PC-3 (cell line): ENCODE measurements at regions of chr2 and their contacts with region 1.

Region 1: GRCh38 chr2:183038341-183039300 is at the start of gene NCKAP1:
- DNase-seq: peak; percentile 92
- ATAC-seq: peak; percentile 86
- H3K4me3 ChIP-seq: peak within 1 kb of the TSS; percentile 95
- H3K27ac ChIP-seq: peak within 1 kb of the TSS; percentile 78
- H3K4me1 ChIP-seq: peaks cover 34% of the 10 kb centered on the region
- H3K27me3 ChIP-seq: no peaks in the 10 kb centered on the region
- CTCF ChIP-seq: peak; percentile 65
- total RNA-seq, gene NCKAP1: 76.2 and 80.3 TPM in 2 replicates

Region 2: GRCh38 chr2:182763311-182763912 is 275.2 kb before region 1 on chr2:
- CTCF ChIA-PET with region 1: no interaction called
- POLR2A ChIA-PET with region 1: no interaction called
- intact Hi-C with region 1: no loop called
- DNase-seq: peak; percentile 73
- ATAC-seq: peak; percentile 68; the same call in 1 of the 2 replicates
- H3K4me3 ChIP-seq: no peak overlapping the region
- H3K27ac ChIP-seq: no peak overlapping the region
- H3K4me1 ChIP-seq: no peaks in the 10 kb centered on the region
- H3K27me3 ChIP-seq: no peaks in the 10 kb centered on the region
- CTCF ChIP-seq: peak; percentile 59

Region 3: DNA sequence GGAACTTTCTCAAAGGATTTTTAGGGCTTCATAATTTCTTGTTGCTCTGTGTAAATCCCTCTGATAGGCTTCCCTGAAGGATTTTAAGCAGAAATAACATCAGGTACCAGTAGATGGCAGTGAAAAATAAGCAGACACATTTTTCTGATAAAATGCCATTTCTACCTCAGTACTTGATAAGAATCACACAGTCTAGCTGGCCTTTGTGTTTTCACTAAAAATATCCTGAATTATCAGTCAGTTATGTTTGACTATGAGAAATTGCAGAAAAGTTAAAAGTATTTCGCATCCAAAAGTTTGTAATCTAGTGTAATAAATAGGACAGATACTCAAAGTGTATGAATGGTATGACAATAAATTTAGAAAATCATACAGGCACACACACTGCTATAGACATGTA is 253.8 kb before region 1 on chr2:
- CTCF ChIA-PET with region 1: no interaction called
- POLR2A ChIA-PET with region 1: no interaction called
- intact Hi-C with region 1: no loop called
- DNase-seq: peak; percentile 61
- ATAC-seq: peak; percentile 49; the same call in 1 of the 2 replicates
- H3K4me3 ChIP-seq: no peak overlapping the region
- H3K27ac ChIP-seq: no peak overlapping the region
- H3K4me1 ChIP-seq: no peaks in the 10 kb centered on the region
- H3K27me3 ChIP-seq: no peaks in the 10 kb centered on the region
- CTCF ChIP-seq: peak; percentile 76

Region 4: DNA sequence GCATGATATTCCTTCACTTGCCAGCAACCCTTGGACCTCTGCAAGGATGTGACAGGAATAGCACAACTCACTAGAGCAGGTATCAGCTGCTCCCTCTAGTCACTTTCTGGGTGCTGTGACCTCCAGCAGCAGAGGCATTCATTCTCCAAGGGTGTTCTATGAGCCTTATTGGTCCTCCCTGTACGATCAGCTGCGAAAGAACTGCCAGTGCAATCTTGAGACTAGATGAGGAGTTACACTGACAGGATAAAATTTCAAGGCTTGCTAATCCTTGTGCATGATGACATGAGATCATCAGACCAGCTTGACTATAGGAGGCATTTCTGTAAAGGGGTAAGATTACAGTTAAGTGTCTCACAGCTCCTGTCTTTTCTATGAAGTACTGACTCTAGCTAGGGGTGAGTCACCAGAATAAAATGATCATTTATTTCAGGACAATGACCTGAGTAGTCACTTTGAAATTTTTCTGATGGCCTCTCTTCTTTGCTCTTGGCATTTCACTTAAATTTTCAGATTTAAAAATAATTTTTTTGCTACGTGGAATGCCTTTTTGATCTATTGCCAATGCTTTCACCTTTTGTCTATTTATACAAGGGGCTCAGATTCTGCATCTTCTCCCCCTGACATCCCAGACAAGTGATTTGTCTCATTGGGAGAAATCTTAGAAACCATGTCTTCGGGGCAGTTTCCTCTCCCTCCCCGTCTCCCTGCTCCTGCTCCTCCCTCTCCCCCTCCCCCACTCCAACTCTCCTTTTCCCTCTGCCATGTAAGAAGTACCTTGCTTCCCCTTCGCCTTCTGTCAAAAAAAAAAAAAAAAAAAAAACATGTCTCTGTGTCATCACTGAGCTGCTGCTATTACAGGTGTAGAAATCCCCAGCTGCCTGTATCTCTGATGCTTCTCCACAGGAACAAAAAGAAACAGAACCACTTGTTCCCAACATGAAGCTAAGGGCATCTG is 123.0 kb before region 1 on chr2:
- CTCF ChIA-PET with region 1: no interaction called
- POLR2A ChIA-PET with region 1: no interaction called
- intact Hi-C with region 1: no loop called
- DNase-seq: peak; percentile 79
- ATAC-seq: peak; percentile 89
- H3K4me3 ChIP-seq: no peak overlapping the region
- H3K27ac ChIP-seq: 0 out of 2 replicates have a peak overlapping the region, but pooled peaks have one; percentile 11
- H3K4me1 ChIP-seq: peaks cover 18% of the 10 kb centered on the region
- H3K27me3 ChIP-seq: no peaks in the 10 kb centered on the region
- CTCF ChIP-seq: no peak

Region 5: DNA sequence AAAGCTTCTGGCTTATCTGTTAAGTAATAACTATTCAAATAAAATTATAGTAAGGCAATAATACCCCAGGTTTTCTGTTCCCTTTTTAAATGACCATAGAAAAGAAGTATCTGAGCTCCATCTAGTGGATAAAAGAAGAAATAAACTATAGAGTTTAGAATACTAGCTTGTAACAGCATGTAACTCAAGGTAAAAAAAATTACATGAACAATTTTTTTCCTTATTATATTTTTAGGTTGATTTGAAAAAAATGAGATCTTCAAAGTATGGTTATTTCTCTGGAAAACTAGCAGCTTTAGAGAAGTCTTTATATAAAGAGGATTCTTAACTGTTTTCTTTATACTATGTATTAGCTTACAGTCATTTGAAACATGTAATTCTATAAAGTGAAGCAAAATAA is 58.5 kb before region 1 on chr2:
- CTCF ChIA-PET with region 1: interaction called, 3 read pairs
- POLR2A ChIA-PET with region 1: no interaction called
- intact Hi-C with region 1: loop called (anchors 5 kb)
- DNase-seq: peak; percentile 69
- ATAC-seq: peak; percentile 49
- H3K4me3 ChIP-seq: no peak overlapping the region
- H3K27ac ChIP-seq: no peak overlapping the region
- H3K4me1 ChIP-seq: no peaks in the 10 kb centered on the region
- H3K27me3 ChIP-seq: no peaks in the 10 kb centered on the region
- CTCF ChIP-seq: peak; percentile 72

Region 6: DNA sequence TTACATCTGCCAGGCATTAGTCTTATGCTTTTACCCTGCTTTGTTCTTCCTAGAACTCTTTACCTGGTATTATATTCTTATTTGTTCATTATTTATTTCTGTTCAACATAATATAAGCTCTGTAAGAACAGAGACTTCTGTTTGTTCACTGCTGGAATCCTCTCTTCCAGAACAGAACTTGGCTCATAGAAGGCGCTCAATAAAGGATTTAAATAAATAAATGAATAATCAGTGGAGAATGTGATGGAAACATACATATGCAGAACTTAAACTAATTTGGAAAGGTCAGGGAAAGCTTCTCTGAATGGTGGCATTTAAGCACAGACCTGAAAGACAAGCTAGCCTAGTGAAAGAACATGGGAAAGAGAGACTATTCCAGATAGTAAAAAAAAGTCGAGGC is 24.6 kb before region 1 on chr2:
- CTCF ChIA-PET with region 1: no interaction called
- POLR2A ChIA-PET with region 1: no interaction called
- intact Hi-C with region 1: loop called (anchors 2 kb)
- DNase-seq: peak; percentile 14
- ATAC-seq: peak; percentile 88
- H3K4me3 ChIP-seq: no peak overlapping the region
- H3K27ac ChIP-seq: 0 out of 2 replicates have a peak overlapping the region, but pooled peaks have one; percentile 1
- H3K4me1 ChIP-seq: peaks cover 8% of the 10 kb centered on the region; the same call in 1 of the 2 replicates
- H3K27me3 ChIP-seq: no peaks in the 10 kb centered on the region
- CTCF ChIP-seq: no peak

Region 7: DNA sequence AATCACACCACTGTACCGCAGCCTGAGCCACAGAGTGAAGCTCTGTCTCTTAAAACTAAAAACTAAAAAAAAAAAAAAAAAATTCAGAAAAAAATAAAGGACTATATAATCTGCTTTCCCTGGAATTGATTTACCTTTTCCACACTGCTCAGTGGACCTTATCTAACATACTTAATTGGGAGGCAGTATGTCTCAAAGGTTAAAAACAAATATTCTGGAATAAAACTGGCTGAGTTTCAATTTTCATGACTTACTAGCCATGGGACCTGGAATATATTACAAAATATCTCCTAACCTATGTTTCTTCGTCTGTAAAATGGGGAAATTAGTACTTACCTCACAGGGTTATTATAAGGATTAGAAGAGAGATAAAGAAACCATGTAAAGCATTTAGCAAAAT is 12.2 kb before region 1 on chr2:
- CTCF ChIA-PET with region 1: no interaction called
- POLR2A ChIA-PET with region 1: no interaction called
- intact Hi-C with region 1: loop called (anchors 1 kb)
- DNase-seq: no peak
- ATAC-seq: no peak
- H3K4me3 ChIP-seq: no peak overlapping the region
- H3K27ac ChIP-seq: no peak overlapping the region
- H3K4me1 ChIP-seq: no peaks in the 10 kb centered on the region
- H3K27me3 ChIP-seq: no peaks in the 10 kb centered on the region
- CTCF ChIP-seq: no peak

Region 8: DNA sequence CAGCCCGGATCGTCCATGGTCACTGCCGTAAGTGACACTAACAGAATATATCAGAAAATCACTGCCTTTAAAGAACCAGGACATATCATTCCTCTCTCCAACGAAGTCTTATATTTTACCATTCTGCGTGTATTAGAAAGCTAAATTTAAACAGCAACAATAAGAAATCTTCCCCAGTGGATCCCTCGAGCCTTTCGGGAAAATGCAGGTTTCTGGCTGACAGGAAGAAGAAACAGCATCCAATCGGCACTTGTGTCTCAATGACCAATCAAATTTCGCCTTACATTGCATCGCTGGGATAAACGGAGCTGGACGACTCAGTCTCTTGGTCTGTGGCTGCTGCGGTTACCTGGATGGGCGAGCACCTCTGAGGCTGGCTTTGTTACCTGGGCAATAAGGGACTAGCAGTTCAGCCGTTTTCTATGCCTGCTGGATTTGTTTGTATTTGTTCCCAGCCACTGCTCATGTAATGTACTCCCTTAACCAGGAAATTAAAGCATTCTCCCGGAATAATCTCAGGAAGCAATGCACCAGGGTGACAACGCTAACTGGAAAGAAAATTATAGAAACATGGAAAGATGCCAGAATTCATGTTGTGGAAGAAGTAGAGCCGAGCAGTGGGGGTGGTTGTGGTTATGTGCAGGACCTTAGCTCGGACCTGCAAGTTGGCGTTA is 40.0 kb after region 1 on chr2 and contains the start of gene DUSP19:
- CTCF ChIA-PET with region 1: no interaction called
- POLR2A ChIA-PET with region 1: interaction called, 8 read pairs
- intact Hi-C with region 1: loop called (anchors 1 kb)
- DNase-seq: peak; percentile 99
- ATAC-seq: peak; percentile 94
- H3K4me3 ChIP-seq: peak within 1 kb of the TSS; percentile 80
- H3K27ac ChIP-seq: 0 out of 2 replicates have a peak within 1 kb of the TSS, but pooled peaks have one; percentile 12
- H3K4me1 ChIP-seq: peaks cover 13% of the 10 kb centered on the region
- H3K27me3 ChIP-seq: no peaks in the 10 kb centered on the region
- CTCF ChIP-seq: no peak
- total RNA-seq, gene DUSP19: 0.51 and 0.58 TPM in 2 replicates

Region 9: GRCh38 chr2:183124222-183124956 is 85.8 kb after region 1 on chr2 and contains the start of gene NUP35:
- CTCF ChIA-PET with region 1: no interaction called
- POLR2A ChIA-PET with region 1: no interaction called
- intact Hi-C with region 1: loop called (anchors 2 kb)
- DNase-seq: peak; percentile 97
- ATAC-seq: peak; percentile 85
- H3K4me3 ChIP-seq: peak within 1 kb of the TSS; percentile 85
- H3K27ac ChIP-seq: peak within 1 kb of the TSS; percentile 92
- H3K4me1 ChIP-seq: peaks cover 15% of the 10 kb centered on the region
- H3K27me3 ChIP-seq: no peaks in the 10 kb centered on the region
- CTCF ChIP-seq: no peak
- total RNA-seq, gene NUP35: 25.0 and 26.0 TPM in 2 replicates